ENCODE measurements at regions of chr7 and their contacts with region 1.

Region 1: DNA sequence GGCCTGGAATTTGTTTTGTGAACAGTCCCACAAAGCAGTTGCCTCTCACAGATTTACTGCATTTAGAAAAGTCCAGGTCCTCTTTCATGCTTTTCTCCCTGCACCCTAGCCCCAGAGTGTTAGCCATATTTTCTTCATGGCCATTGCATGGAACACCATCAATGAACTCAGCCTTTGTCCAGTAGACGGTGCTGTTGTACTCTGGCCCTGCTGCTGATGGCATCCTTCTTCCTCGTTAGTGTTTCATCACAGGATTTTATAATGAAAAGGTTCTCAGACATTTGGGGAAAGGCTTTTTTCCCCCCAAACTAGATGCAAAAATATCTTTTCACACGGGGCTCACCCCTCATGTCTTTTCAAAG is 93.0 kb upstream of the SLC25A13 start:
- DNase-seq: peak; percentile 22
- ATAC-seq: peak; percentile 63 to 82

Region 2: GRCh38 chr7:95916573-95917297 is 498.2 kb before region 1 on chr7:
- intact Hi-C with region 1: loop called in 1 of 2 experiments (anchors 5 kb)
- DNase-seq: peak; percentile 73
- ATAC-seq: peak; percentile 77 to 81

Region 3: GRCh38 chr7:96481796-96482443 is 67.0 kb after region 1 on chr7:
- intact Hi-C with region 1: no loop called
- DNase-seq: no peak
- ATAC-seq: no peak

Region 4: DNA sequence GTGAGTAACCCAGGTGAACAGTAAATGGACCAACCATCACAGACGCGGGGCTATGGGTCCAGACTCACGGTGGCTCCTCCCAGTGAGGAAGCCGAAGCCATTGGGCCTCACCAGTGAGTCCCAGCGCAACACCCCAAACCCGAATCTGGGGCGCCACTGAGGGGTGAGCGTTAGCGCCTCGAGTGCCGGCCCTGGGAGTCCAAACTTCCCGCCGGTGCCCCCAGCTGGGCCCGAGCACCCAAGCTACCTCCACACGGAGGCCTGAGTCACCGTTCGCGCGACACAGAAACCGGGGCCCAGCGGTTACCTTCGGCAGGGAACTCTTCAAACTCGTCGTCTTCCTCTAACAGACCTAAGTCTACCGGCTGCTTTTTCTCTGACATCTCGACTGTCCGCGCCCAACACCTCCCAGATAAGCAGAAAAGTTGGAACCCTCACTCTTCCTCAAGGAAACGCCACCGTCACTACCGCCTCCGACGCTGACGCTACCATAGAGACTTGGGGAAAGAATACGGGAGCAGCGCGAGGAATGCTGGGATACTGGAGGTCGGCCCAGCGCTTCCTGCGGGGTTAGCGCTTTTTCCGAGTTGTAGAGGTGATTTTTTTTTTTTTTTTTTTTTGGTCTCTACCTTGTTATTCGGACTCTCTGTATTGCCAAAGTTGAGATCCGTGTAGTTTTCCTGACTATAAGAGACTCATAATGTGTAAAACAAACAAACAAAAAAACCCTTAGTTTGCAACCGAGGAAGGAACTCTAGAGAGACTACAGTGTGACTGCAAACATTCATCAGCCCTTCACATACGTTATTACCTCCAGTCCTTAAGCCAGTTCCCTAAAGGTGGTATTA is 294.7 kb after region 1 on chr7 and contains the start of gene SEM1:
- intact Hi-C with region 1: loop called in 1 of 2 experiments (anchors 10 kb)
- DNase-seq: peak; percentile 92
- ATAC-seq: peak; percentile 100
- total RNA-seq, gene SEM1: 51.3 to 59.8 TPM

Region 5: GRCh38 chr7:97027427-97028234 is 612.7 kb after region 1 on chr7:
- intact Hi-C with region 1: loop called (anchors 2 to 10 kb)
- DNase-seq: peak; percentile 77
- ATAC-seq: peak; percentile 79 to 91

Measured in left cardiac atrium (tissue), 4 donors.